Activated CD4-positive, alpha-beta T cell treated with anti-CD3 and anti-CD28 coated beads for 36 hours (primary cell): ENCODE measurements at regions of chr15 and their contacts with region 1.

Region 1: GRCh38 chr15:45126535-45127158 is 3.0 kb downstream of the DUOXA1 start:
- DNase-seq: peak; percentile 51
- ATAC-seq: peak; percentile 50
- H3K4me3 Mint-ChIP-seq: no peak overlapping the region
- H3K27ac Mint-ChIP-seq: no peak overlapping the region
- H3K4me1 Mint-ChIP-seq: no peaks in the 10 kb centered on the region
- H3K27me3 Mint-ChIP-seq: peaks cover 43% of the 10 kb centered on the region

Region 2: GRCh38 chr15:45112586-45113379 is 13.9 kb before region 1 on chr15:
- CTCF ChIA-PET with region 1: interaction called, 36 read pairs
- POLR2A ChIA-PET with region 1: no interaction called
- intact Hi-C with region 1: no loop called
- DNase-seq: peak; percentile 32
- ATAC-seq: no peak
- H3K4me3 Mint-ChIP-seq: no peak overlapping the region
- H3K27ac Mint-ChIP-seq: no peak overlapping the region
- H3K4me1 Mint-ChIP-seq: peaks cover 38% of the 10 kb centered on the region
- H3K27me3 Mint-ChIP-seq: peaks cover 72% of the 10 kb centered on the region